ENCODE measurements at regions of chr3 and their contacts with region 1.

Region 1: DNA sequence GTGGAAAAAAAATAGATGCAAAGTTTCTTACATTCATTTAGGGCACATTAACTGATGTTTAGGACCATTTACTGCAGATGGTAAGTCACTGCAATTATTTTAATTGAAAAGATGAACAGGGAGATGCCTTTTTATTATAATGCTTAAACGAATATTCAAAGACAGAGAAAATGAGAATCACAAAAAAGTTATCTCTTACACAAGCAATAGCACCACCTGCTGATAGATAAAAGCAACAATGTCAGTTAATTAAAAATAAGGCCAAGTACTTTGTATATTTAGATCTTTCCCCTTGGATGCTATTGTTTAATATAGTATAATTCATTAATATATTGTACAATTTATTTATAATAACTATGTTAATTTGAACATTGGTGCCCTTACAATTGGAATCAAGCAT is 55.9 kb downstream of the IFT80 start:
- DNase-seq: peak; percentile 16
- ATAC-seq: no peak
- H3K4me3 ChIP-seq: no peak overlapping the region
- H3K27ac ChIP-seq: no peak overlapping the region
- H3K4me1 ChIP-seq: no peaks in the 10 kb centered on the region
- H3K27me3 ChIP-seq: no peaks in the 10 kb centered on the region
- CTCF ChIP-seq: peak; percentile 41
- EP300 ChIP-seq: no peak
- POLR2A ChIP-seq: no peak
- RAD21 ChIP-seq: no peak

Region 2: GRCh38 chr3:159884661-159885402 is 458.3 kb before region 1 on chr3:
- CTCF ChIA-PET with region 1: no interaction called
- POLR2A ChIA-PET with region 1: no interaction called
- in situ Hi-C with region 1: no loop called
- intact Hi-C with region 1: loop called (anchors 10 kb)
- DNase-seq: peak; percentile 9
- ATAC-seq: peak; percentile 82
- H3K4me3 ChIP-seq: no peak overlapping the region
- H3K27ac ChIP-seq: no peak overlapping the region
- H3K4me1 ChIP-seq: no peaks in the 10 kb centered on the region
- H3K27me3 ChIP-seq: no peaks in the 10 kb centered on the region
- CTCF ChIP-seq: peak; percentile 62
- EP300 ChIP-seq: no peak
- POLR2A ChIP-seq: no peak
- RAD21 ChIP-seq: no peak

Region 3: DNA sequence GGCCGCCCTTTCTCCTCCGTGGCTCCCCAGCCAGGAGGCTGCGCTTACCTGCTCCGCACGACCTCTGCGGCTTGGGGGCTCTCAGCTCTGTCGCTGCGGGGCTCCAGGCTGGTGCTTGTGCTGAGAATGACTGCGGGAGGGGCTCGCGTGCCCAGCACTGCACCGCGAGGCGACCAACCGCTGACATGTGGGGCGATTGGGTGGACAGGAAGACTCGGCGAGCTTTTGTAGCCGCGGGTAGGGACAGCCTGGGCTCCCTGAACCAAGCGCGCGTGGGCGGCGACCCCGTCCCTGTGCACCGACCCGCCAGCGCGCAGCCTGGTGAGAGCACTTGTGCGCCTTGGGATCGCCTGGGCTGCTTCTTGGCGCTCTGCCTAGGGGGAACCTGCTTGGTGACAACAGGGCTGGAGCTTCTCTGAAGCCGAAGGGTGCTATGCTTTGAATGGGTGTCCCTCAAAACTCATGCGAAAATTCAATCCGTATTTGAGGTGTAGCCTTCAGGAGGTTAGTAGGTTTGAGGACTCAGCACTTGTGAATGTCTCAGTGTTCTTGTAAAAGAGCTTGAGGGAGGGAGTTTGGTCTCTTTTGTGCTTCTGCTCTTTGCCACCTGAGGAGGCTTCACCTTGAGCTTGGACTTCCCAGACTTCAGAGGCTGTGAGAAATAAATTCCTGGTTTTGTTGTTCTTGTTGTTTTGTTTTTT is 304.1 kb before region 1 on chr3:
- CTCF ChIA-PET with region 1: no interaction called
- POLR2A ChIA-PET with region 1: no interaction called
- in situ Hi-C with region 1: loop called (anchors 10 kb)
- intact Hi-C with region 1: no loop called
- DNase-seq: no peak
- ATAC-seq: peak; percentile 79
- H3K4me3 ChIP-seq: peak overlapping the region in 2 of 3 experiments; percentile 26 to 59; a peak in 3 of 6 replicates
- H3K27ac ChIP-seq: no peak overlapping the region
- H3K4me1 ChIP-seq: peaks cover 7% of the 10 kb centered on the region; the same call in 1 of the 2 replicates
- H3K27me3 ChIP-seq: peaks cover 3 to 22% of the 10 kb centered on the region in 2 experiments; a peak in 3 of 5 replicates
- CTCF ChIP-seq: 0 out of 2 replicates have a peak, but pooled peaks have one; percentile 10
- EP300 ChIP-seq: no peak
- POLR2A ChIP-seq: no peak
- RAD21 ChIP-seq: no peak

Region 4: DNA sequence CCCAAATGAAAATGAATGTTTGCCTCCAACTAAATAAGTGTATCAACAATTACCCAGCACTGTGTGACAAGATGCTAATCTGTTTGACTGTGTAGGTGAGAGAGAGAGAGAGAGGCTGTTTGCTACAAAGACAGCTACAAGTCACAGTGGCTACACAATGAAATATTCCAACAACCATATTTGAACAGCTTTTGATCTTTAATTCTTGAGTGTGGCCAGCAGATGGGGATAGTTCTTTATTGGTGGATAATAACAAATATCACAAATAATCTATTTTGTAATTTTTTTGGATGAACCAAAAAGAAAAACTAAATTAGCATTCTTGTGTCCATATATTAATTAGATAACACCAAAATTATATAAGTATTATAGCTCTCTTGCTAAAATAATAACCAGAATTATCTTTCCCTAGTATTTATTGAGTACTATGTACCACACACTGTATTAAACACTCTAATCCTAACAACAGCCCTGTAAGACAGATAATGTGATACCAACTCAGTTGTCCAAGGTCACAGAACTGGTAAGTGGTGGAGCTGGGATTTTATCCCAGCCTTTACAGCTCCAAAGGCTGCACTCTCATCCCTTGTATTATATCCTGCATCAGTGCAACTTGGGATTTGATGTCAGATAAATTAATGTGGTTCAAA is 179.8 kb before region 1 on chr3:
- CTCF ChIA-PET with region 1: interaction called, 10 read pairs
- POLR2A ChIA-PET with region 1: no interaction called
- in situ Hi-C with region 1: loop called (anchors 5 kb)
- intact Hi-C with region 1: loop called (anchors 1 kb)
- DNase-seq: peak; percentile 4
- ATAC-seq: peak; percentile 48
- H3K4me3 ChIP-seq: no peak overlapping the region
- H3K27ac ChIP-seq: no peak overlapping the region
- H3K4me1 ChIP-seq: no peaks in the 10 kb centered on the region
- H3K27me3 ChIP-seq: no peaks in the 10 kb centered on the region; a peak in 2 of 5 replicates
- CTCF ChIP-seq: peak; percentile 45
- EP300 ChIP-seq: no peak
- POLR2A ChIP-seq: no peak
- RAD21 ChIP-seq: no peak

Region 5: GRCh38 chr3:160245261-160245800 is 97.8 kb before region 1 on chr3:
- CTCF ChIA-PET with region 1: no interaction called
- POLR2A ChIA-PET with region 1: no interaction called
- in situ Hi-C with region 1: no loop called
- intact Hi-C with region 1: no loop called
- DNase-seq: no peak
- ATAC-seq: no peak
- H3K4me3 ChIP-seq: no peak overlapping the region
- H3K27ac ChIP-seq: no peak overlapping the region
- H3K4me1 ChIP-seq: no peaks in the 10 kb centered on the region
- H3K27me3 ChIP-seq: no peaks in the 10 kb centered on the region
- CTCF ChIP-seq: no peak
- EP300 ChIP-seq: no peak
- POLR2A ChIP-seq: no peak
- RAD21 ChIP-seq: no peak

Measured in HepG2 (cell line).